ENCODE measurements at regions of chr9 and their contacts with region 1.

Region 1: DNA sequence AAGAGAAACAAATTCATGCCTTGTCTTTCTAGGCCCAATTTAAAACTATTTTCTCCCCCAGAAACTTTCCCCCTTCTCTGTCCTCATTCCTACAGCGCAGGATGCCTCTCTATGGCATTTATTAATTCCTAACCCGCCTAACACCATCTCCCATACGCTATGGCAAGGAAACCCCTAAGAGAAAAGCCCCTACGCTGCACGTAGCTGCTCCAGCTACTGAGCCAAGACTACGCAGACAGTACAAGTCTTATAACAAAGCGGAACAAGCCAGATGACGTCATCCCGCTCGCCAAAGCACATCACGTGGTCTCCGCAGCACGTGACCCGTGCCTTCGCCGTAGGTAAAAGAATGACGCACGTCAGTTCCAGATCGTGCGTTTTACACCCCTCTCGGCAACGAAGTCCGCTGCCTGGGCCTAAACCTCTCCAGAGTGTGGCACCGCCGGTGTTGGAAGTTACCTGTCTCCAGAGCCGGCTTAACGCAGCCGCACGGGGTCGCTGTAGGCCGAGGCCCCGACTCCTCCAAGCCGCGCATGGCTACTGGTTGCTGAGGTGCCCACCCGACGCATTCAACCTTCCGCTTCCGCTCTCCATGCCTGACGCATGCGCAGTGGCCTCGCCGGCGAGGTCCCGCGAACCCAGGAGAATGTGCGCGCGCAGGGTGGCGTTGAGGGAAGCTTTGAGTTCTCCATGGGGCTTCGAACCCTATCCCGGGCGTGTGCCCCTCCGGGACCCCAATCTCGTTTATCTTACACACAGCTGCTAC is at the start of gene TRMO:
- DNase-seq: peak; percentile 98 to 99
- ATAC-seq: peak; percentile 95 to 96 (median 95)
- H3K4me3 ChIP-seq: peak within 1 kb of the TSS; percentile 72
- H3K27ac ChIP-seq: peak within 1 kb of the TSS; percentile 96
- H3K4me1 ChIP-seq: peaks cover 14% of the 10 kb centered on the region
- H3K27me3 ChIP-seq: no peaks in the 10 kb centered on the region
- CTCF ChIP-seq: peak; percentile 64
- total RNA-seq, gene TRMO: 7.0 to 11.7 (median 8.6) TPM

Region 2: GRCh38 chr9:97982683-97983588 is 60.8 kb after region 1 on chr9 and contains the start of gene ANP32B:
- intact Hi-C with region 1: loop called (anchors 2 kb)
- DNase-seq: peak; percentile 93 to 95
- ATAC-seq: peak; percentile 79 to 91 (median 86)
- H3K4me3 ChIP-seq: peak within 1 kb of the TSS; percentile 91
- H3K27ac ChIP-seq: peak within 1 kb of the TSS; percentile 98
- H3K4me1 ChIP-seq: peaks cover 41% of the 10 kb centered on the region
- H3K27me3 ChIP-seq: no peaks in the 10 kb centered on the region
- CTCF ChIP-seq: peak; percentile 97
- total RNA-seq, gene ANP32B: 52.8 to 73.9 (median 66.5) TPM

Region 3: DNA sequence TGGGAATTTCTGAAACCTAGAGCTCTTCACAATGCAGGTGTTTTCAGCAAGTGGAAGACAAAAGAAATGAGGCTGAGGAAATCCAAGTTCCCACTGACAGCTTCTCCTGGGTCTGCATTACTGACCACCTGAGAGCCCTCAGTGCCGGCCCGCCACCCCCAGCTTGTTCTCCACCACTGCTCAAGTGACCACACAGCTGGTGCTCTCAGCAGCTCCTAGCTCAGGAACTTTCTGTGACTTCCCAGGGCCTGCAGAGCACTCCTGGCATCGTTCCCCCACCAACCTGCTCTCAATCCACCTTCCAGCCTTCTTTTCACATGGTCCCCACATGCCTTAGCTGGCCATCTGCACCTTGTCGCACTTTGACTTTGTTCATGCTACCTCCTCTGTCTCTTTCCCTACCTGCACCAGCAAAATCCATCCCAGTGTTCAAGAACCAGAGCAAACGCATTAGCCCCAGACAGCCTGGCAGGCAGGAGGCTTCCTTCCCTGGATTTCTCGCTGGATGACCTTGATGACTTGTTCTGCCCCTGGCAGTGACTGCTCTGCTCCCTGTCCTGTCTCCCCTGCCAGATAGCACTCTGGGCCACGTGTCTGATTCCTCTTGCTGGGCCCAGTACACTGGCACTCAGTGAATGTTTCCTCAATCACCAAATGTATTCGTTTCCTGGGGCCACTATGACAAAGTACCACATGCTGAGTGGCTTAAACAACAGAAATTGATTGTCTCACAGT is 99.3 kb after region 1 on chr9:
- intact Hi-C with region 1: no loop called
- DNase-seq: peak; percentile 24 to 76
- ATAC-seq: peak; percentile 72 to 88 (median 80)
- H3K4me3 ChIP-seq: no peak overlapping the region
- H3K27ac ChIP-seq: peak overlapping the region; percentile 47
- H3K4me1 ChIP-seq: peaks cover 44% of the 10 kb centered on the region
- H3K27me3 ChIP-seq: no peaks in the 10 kb centered on the region
- CTCF ChIP-seq: no peak

Region 4: DNA sequence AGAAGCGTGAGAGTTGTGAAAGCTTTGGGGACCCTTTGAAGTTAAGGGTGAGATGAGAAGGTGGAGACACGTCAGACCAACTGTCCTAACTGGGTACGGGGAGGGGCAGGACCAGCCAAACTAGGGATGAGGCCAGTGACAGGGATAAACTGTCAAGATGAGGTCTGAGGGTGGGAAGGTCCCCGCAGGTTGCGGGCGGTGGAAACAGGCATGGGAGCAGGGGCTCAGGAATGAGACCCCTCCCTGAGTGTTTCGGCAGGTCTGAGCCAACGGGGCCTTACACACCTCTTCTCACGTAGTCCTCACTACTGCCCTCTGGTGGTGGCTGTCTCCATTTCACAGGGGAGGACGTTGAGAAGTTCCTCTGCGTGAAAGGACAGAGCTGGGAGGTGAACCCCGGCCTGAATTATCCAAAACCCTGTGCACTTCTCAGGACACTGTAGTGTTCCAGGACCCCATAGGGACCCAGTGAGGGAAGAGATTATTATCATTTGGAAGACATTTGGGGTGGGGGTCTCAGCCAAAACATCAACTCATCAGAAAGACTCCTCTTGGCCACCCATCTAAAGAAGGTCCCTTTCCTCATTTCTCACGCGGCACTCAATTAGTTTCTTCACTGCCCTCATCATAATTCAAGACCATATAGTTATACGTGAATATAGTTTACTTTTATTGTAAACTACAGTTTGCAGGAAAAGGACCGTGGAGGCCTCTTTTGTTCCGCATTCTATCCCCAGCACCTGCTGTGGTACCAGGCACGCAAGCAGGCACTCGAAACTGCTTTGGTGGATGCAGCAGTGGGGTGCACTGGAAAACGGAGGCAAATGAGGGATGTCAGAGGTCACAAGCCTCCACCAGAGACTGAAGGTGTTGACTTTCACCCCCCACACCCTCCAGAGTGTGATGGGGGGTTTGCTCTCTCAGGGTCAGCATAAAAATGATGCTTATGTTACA is 112.7 kb after region 1 on chr9:
- intact Hi-C with region 1: loop called (anchors 2 to 5 kb)
- DNase-seq: peak; percentile 79 to 88
- ATAC-seq: peak; percentile 53 to 76 (median 74)
- H3K4me3 ChIP-seq: peak overlapping the region; percentile 15
- H3K27ac ChIP-seq: peak overlapping the region; percentile 87
- H3K4me1 ChIP-seq: peaks cover 31% of the 10 kb centered on the region
- H3K27me3 ChIP-seq: no peaks in the 10 kb centered on the region
- CTCF ChIP-seq: peak; percentile 89

Region 5: GRCh38 chr9:98056269-98057137 is 134.4 kb after region 1 on chr9 and contains the start of gene NANS:
- intact Hi-C with region 1: loop called in 1 of 2 experiments (anchors 5 kb)
- DNase-seq: peak; percentile 94 to 96
- ATAC-seq: peak; percentile 96 to 99 (median 98)
- H3K4me3 ChIP-seq: peak within 1 kb of the TSS; percentile 76
- H3K27ac ChIP-seq: peak within 1 kb of the TSS; percentile 92
- H3K4me1 ChIP-seq: peaks cover 12% of the 10 kb centered on the region
- H3K27me3 ChIP-seq: no peaks in the 10 kb centered on the region
- CTCF ChIP-seq: no peak
- total RNA-seq, gene NANS: 21.1 to 53.8 (median 26.5) TPM

Region 6: GRCh38 chr9:98255578-98256296 is 333.6 kb after region 1 on chr9 and contains the start of gene TBC1D2:
- intact Hi-C with region 1: loop called in 1 of 2 experiments (anchors 2 kb)
- DNase-seq: peak; percentile 94 to 98
- ATAC-seq: peak; percentile 97 to 99 (median 98)
- H3K4me3 ChIP-seq: peak within 1 kb of the TSS; percentile 93
- H3K27ac ChIP-seq: peak within 1 kb of the TSS; percentile 90
- H3K4me1 ChIP-seq: peaks cover 6% of the 10 kb centered on the region
- H3K27me3 ChIP-seq: no peaks in the 10 kb centered on the region
- CTCF ChIP-seq: no peak
- total RNA-seq, gene TBC1D2: 1.9 to 2.7 (median 2.4) TPM

Region 7: DNA sequence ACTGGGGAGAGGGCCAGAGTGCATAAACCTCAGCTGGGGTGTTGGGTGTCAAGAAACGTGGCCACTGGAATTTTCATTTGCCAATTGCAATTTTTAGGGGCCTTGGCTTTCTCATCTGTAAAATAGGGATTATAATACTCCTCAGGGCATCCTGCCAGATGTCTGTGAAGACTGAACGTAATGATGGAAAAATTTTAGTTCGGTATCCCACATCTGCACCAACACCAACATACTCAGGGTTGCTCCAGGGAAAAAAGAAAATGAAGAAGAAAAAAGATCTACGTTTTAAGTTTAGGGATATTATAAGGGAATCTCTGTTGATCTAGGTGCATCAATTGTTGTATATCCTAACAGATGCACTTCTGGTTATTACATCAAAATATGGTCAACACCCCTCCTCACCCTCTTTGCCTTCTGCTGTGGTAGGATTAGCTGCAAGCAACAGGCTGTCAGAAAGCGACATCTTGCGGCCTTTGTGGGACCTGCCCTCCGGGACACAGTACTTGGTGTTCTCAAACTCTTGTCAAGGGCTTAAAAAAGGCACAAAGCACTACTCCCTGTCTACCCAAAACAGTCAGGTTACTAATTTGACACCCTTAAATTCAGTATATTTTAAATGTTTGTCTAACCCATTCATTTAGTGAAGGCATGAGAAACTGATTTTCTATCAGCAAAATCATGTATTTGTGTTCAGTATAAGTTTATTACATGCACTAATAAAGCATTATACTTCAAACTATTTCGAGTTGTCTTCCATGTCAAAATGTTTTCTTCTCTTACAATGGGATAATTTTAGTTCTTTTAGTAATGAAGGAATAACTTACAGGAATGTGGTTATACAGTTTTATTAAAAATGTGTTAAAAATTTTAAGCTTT is 341.6 kb after region 1 on chr9:
- intact Hi-C with region 1: loop called (anchors 1 to 2 kb)
- DNase-seq: peak; percentile 78 to 89
- ATAC-seq: peak; percentile 82 to 99 (median 92)
- H3K4me3 ChIP-seq: no peak overlapping the region
- H3K27ac ChIP-seq: no peak overlapping the region
- H3K4me1 ChIP-seq: no peaks in the 10 kb centered on the region
- H3K27me3 ChIP-seq: no peaks in the 10 kb centered on the region
- CTCF ChIP-seq: peak; percentile 92